ENCODE measurements at regions of chr14 and their contacts with region 1.

Region 1: DNA sequence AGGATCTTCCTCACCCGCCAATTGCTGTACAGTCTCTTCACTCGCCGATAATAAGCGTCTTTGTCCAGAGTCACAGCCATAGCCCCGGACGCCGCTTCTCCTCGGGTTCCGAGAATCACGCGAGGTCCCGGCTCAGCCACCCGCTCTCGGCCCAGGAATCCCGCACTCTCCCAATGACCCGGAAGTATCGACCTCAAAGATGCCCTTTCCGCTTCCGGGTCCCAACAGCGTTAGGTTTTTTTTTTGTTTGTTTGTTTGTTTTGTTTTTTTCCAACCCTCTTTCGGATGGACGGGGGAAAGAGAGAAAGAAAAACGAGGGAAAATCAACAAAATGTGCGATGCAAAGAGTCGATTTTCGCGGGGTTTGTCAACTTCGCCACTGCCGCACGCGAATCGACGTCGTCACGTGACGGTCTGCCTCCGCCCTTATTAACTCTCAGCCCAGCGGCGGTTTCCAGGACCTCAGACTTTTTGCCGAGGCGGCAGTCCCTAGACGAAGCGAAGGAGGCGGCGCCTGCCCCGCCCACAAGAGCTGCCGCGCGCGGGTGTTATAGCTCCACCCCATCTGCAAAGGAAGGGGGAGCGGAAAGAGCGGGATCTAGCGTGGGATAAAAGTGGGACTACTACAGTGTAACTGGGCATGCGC is at the start of gene SUPT16H:
- DNase-seq: peak; percentile 96
- ATAC-seq: peak; percentile 94
- H3K4me3 ChIP-seq: peak within 1 kb of the TSS; percentile 75 to 99 (median 98)
- H3K4me3 Mint-ChIP-seq: peak within 1 kb of the TSS; percentile 96
- H3K27ac ChIP-seq: peak within 1 kb of the TSS; percentile 82 to 94
- H3K27ac Mint-ChIP-seq: peak within 1 kb of the TSS; percentile 100
- H3K4me1 ChIP-seq: peaks cover 20 to 26% of the 10 kb centered on the region in 2 donors
- H3K4me1 Mint-ChIP-seq: peaks cover 43% of the 10 kb centered on the region
- H3K27me3 ChIP-seq: no peaks in the 10 kb centered on the region
- H3K27me3 Mint-ChIP-seq: no peaks in the 10 kb centered on the region
- CTCF ChIP-seq: no peak
- total RNA-seq, gene SUPT16H: 78.3 and 84.4 TPM in 2 replicates

Region 2: GRCh38 chr14:21103710-21104447 is 280.1 kb before region 1 on chr14:
- CTCF ChIA-PET with region 1: interaction called, 3 read pairs
- POLR2A ChIA-PET with region 1: no interaction called
- intact Hi-C with region 1: loop called (anchors 5 kb)
- DNase-seq: peak; percentile 97
- ATAC-seq: peak; percentile 86
- H3K4me3 ChIP-seq: peak overlapping the region; percentile 72 to 92 (median 84)
- H3K4me3 Mint-ChIP-seq: peak overlapping the region; percentile 78
- H3K27ac ChIP-seq: peak overlapping the region; percentile 93 to 96
- H3K27ac Mint-ChIP-seq: peak overlapping the region; percentile 96
- H3K4me1 ChIP-seq: peaks cover 17 to 25% of the 10 kb centered on the region in 2 donors
- H3K4me1 Mint-ChIP-seq: peaks cover 15% of the 10 kb centered on the region
- H3K27me3 ChIP-seq: peaks cover 0 to 25% (median 15%) of the 10 kb centered on the region in 4 experiments
- H3K27me3 Mint-ChIP-seq: peaks cover 26% of the 10 kb centered on the region
- CTCF ChIP-seq: peak; percentile 76

Region 3: DNA sequence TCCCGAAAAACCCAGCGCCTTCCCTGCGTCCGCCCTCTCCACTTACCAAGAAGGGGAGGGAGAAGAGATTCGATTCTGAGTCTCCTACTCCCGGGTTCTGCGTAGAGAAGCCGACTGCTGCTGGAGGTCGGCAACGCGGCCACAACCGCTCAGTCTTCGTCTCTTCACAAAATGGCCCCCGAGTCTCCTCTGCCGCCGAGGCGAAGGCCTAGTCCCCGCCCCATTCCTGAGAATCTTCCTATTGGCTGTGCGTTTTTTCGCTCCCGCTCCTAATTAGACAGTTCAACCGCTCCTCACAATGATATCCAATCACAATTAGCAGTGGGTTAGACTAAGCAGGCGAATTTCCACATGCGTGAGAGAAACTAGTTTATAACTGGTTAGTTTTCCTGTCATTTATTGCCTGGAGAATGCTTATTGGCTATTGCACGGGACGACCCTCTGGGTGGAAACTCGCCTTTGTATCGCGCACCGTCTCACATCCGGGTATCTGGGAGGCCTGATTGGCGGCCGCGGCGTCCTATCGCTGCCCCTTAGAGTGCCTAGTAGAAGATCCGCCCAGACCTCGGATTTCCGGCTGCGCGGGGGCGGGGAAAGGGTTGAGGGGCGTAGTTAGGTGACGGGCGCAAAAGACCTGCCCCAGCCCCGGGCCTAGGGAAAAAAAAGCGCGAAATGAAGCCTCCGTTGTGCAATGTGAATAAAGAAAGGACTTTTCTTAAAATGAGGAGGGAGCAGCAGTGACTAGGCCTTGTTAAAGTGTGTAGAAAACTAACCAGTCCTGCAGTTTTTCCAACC is 114.5 kb before region 1 on chr14 and contains the start of gene HNRNPC:
- CTCF ChIA-PET with region 1: interaction called, 3 read pairs
- POLR2A ChIA-PET with region 1: interaction called, 5 read pairs
- intact Hi-C with region 1: loop called (anchors 1 kb)
- DNase-seq: peak; percentile 100
- ATAC-seq: peak; percentile 83
- H3K4me3 ChIP-seq: peak within 1 kb of the TSS; percentile 67 to 100 (median 99)
- H3K4me3 Mint-ChIP-seq: peak within 1 kb of the TSS; percentile 98
- H3K27ac ChIP-seq: peak within 1 kb of the TSS; percentile 91 to 92
- H3K27ac Mint-ChIP-seq: peak within 1 kb of the TSS; percentile 99
- H3K4me1 ChIP-seq: peaks cover 37 to 48% of the 10 kb centered on the region in 2 donors
- H3K4me1 Mint-ChIP-seq: peaks cover 40% of the 10 kb centered on the region
- H3K27me3 ChIP-seq: no peaks in the 10 kb centered on the region
- H3K27me3 Mint-ChIP-seq: no peaks in the 10 kb centered on the region
- CTCF ChIP-seq: no peak
- total RNA-seq, gene HNRNPC: 496 and 497 TPM in 2 replicates

Region 4: GRCh38 chr14:21352587-21352986 is 31.4 kb before region 1 on chr14:
- CTCF ChIA-PET with region 1: no interaction called
- POLR2A ChIA-PET with region 1: no interaction called
- intact Hi-C with region 1: loop called (anchors 2 kb)
- DNase-seq: peak; percentile 81
- ATAC-seq: peak; percentile 97
- H3K4me3 ChIP-seq: no peak overlapping the region
- H3K4me3 Mint-ChIP-seq: peak overlapping the region; percentile 38
- H3K27ac ChIP-seq: peak overlapping the region; percentile 62 to 73
- H3K27ac Mint-ChIP-seq: peak overlapping the region; percentile 83
- H3K4me1 ChIP-seq: peaks cover 10 to 11% of the 10 kb centered on the region in 2 donors
- H3K4me1 Mint-ChIP-seq: peaks cover 17% of the 10 kb centered on the region
- H3K27me3 ChIP-seq: no peaks in the 10 kb centered on the region
- H3K27me3 Mint-ChIP-seq: no peaks in the 10 kb centered on the region
- CTCF ChIP-seq: no peak

Region 5: GRCh38 chr14:21455911-21456667 is 72.1 kb after region 1 on chr14 and contains the start of gene CHD8:
- CTCF ChIA-PET with region 1: interaction called, 3 read pairs
- POLR2A ChIA-PET with region 1: interaction called, 4 read pairs
- intact Hi-C with region 1: loop called (anchors 1 kb)
- DNase-seq: peak; percentile 100
- ATAC-seq: peak; percentile 98
- H3K4me3 ChIP-seq: peak within 1 kb of the TSS; percentile 69 to 98 (median 94)
- H3K4me3 Mint-ChIP-seq: peak within 1 kb of the TSS; percentile 100
- H3K27ac ChIP-seq: peak within 1 kb of the TSS; percentile 89 to 93
- H3K27ac Mint-ChIP-seq: peak within 1 kb of the TSS; percentile 100
- H3K4me1 ChIP-seq: peaks cover 11 to 17% of the 10 kb centered on the region in 2 donors
- H3K4me1 Mint-ChIP-seq: peaks cover 36% of the 10 kb centered on the region
- H3K27me3 ChIP-seq: no peaks in the 10 kb centered on the region
- H3K27me3 Mint-ChIP-seq: no peaks in the 10 kb centered on the region
- CTCF ChIP-seq: peak; percentile 74
- total RNA-seq, gene CHD8: 155 and 157 TPM in 2 replicates

Region 6: DNA sequence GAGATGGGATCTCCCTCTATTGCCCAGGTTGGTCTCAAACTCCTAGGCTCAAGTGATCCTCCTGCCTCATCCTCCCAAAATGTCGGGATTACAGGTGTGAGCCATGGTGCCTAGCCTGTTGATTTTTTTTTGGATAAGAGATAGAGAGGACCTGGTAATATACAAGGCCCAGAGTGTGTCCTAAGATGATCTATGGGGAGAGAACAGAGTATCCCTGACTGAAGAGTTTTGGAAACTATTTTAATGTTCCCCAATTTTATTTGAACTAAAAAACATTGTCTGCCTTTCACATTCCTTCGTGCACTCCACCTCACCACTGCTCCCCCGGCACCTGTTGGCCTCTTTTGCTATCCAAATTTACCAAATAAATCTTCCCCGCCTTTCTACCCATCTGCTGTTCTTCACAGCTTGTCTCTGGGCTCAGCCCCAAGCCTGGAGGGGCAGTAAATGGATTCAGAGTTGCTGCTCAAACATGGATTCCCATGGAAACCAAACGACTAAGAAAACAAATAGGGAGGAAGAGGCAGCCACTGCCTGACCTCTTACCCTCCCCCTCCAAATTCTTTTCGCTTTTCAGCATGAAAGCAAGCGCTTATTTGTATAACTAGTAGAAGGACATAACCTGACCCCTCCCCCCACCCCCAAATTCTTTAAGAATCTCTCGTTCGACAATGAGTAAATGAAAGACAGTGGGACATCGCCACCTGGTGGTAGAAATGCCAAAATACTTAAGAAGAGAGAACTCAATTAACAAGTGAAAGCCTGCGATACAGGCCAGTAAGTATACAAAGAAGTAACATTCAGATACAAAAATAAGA is 173.3 kb after region 1 on chr14:
- CTCF ChIA-PET with region 1: no interaction called
- POLR2A ChIA-PET with region 1: no interaction called
- intact Hi-C with region 1: loop called (anchors 1 kb)
- DNase-seq: peak; percentile 88
- ATAC-seq: peak; percentile 53
- H3K4me3 ChIP-seq: peak overlapping the region in 3 of 5 experiments; percentile 1 to 45 (median 31)
- H3K4me3 Mint-ChIP-seq: peak overlapping the region; percentile 26
- H3K27ac ChIP-seq: no peak overlapping the region
- H3K27ac Mint-ChIP-seq: no peak overlapping the region
- H3K4me1 ChIP-seq: peaks cover 5% of the 10 kb centered on the region in 2 donors
- H3K4me1 Mint-ChIP-seq: peaks cover 6% of the 10 kb centered on the region
- H3K27me3 ChIP-seq: no peaks in the 10 kb centered on the region
- H3K27me3 Mint-ChIP-seq: peaks cover 3% of the 10 kb centered on the region
- CTCF ChIP-seq: peak; percentile 81